Heart right ventricle (tissue), 16 donors: ENCODE measurements at regions of chr9 and their contacts with region 1.

Region 1: DNA sequence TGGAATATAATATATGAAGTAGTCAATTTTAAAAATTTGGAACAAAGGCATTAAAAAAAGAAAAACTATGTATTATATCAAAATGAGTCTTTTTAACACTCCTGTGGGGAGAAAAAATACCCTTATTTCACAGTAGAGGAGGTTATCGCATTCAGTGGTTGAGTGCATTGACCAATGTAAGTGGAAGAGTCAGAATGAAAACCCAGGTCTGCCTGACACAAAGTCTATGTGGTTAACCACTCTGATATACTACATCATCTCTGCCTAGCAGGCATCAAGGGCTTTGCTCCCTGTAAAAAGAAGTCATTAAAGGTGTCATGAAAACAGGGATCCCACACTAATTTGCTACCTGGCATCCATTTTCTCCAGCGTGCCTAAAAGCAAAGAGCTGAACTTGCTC is 417.2 kb upstream of the C9orf72 start:
- DNase-seq: no peak
- ATAC-seq: no peak
- H3K4me3 ChIP-seq: no peak overlapping the region
- H3K27ac ChIP-seq: no peak overlapping the region
- H3K4me1 ChIP-seq: no peaks in the 10 kb centered on the region
- H3K27me3 ChIP-seq: no peaks in the 10 kb centered on the region
- CTCF ChIP-seq: no peak

Region 2: GRCh38 chr9:26856413-26857032 is 1134.0 kb before region 1 on chr9:
- intact Hi-C with region 1: no loop called
- DNase-seq: no peak
- ATAC-seq: no peak
- H3K4me3 ChIP-seq: no peak overlapping the region
- H3K27ac ChIP-seq: no peak overlapping the region
- H3K4me1 ChIP-seq: no peaks in the 10 kb centered on the region
- H3K27me3 ChIP-seq: no peaks in the 10 kb centered on the region
- CTCF ChIP-seq: peak in 7 of 9 donors; percentile 9 to 47 (median 23)

Region 3: DNA sequence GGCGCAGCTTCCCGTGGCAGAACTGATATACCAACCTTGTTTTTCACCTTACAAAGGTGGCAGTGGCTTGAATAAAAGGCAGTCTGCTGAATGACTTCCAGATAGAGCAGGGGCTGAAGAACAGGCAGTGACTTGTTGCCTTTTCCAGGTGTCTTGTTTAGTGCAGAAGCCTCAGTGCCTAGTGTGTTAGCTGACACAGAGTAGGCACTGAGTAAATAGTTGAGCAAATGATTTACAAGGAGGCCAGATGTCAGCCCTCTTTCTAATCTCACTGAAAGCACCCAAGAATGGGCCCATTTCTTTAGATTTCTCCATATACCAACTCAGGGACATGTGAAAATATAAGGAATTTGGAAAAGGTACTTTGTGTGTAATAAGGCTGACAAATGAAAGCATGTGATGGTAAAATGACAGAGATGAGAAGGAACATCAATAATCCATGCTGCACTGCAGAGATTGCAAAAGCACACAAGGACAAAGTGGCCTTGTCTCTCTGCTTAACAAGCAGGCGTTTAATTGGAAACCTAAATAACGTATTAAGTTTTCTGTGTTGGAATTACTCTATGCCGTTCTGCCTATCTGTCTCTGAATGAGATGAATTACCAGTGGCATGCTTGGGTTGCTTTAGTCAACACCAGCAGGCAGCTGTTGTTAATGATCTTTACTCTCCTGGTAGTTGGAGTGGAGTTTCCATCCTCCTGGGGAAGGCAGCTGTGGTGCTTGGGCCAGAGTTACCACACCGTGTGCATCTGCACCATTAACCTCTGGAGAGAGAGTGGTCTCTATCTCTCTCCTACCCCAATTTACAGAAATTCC is 57.1 kb before region 1 on chr9:
- intact Hi-C with region 1: loop called in 1 of 10 experiments (anchors 10 kb)
- DNase-seq: no peak
- ATAC-seq: no peak
- H3K4me3 ChIP-seq: no peak overlapping the region
- H3K27ac ChIP-seq: no peak overlapping the region
- H3K4me1 ChIP-seq: no peaks in the 10 kb centered on the region
- H3K27me3 ChIP-seq: no peaks in the 10 kb centered on the region
- CTCF ChIP-seq: no peak

Region 4: DNA sequence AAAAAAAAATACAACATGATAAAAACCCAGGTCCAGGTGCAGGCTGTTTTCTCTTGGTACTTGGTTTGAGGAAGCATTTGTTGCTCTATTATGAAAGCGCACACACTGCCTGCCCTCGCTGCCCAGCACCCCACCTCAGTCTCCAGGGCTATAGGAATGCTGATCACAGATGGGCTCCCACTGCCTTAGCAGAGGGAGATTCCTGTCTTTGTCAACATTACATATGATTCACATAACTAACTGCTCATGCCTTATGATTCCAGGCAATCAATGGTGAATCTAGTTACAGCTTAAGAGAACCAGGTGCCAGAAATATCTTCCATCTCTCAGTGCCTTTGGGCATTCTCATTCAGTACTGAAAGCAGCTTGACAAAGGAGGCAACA is 41.7 kb after region 1 on chr9:
- intact Hi-C with region 1: no loop called
- DNase-seq: no peak
- ATAC-seq: no peak
- H3K4me3 ChIP-seq: no peak overlapping the region
- H3K27ac ChIP-seq: no peak overlapping the region
- H3K4me1 ChIP-seq: no peaks in the 10 kb centered on the region
- H3K27me3 ChIP-seq: no peaks in the 10 kb centered on the region
- CTCF ChIP-seq: no peak